ENCODE measurements at regions of chr1 and their contacts with region 1.

Region 1: GRCh38 chr1:204506961-204507387 is 9.2 kb upstream of the MDM4 start:
- DNase-seq: peak; percentile 43
- H3K4me3 ChIP-seq: peak overlapping the region; percentile 44 to 72
- H3K27ac ChIP-seq: peak overlapping the region; percentile 92 to 95
- H3K4me1 ChIP-seq: peaks cover 3 to 5% of the 10 kb centered on the region in 2 experiments; a peak in 2 of 4 replicates
- H3K27me3 ChIP-seq: no peaks in the 10 kb centered on the region
- CTCF ChIP-seq: no peak
- EP300 ChIP-seq: peak in 1 of 2 experiments; percentile 62; a peak in 1 of 4 replicates
- RAD21 ChIP-seq: no peak

Region 2: GRCh38 chr1:204411451-204412204 is 95.3 kb before region 1 on chr1 and contains the start of gene PPP1R15B:
- CTCF ChIA-PET with region 1: interaction called, 13 read pairs
- POLR2A ChIA-PET with region 1: no interaction called
- DNase-seq: peak; percentile 93
- H3K4me3 ChIP-seq: peak within 1 kb of the TSS; percentile 78 to 89
- H3K27ac ChIP-seq: peak within 1 kb of the TSS; percentile 97 to 98
- H3K4me1 ChIP-seq: peaks cover 0 to 14% of the 10 kb centered on the region in 2 experiments; a peak in 2 of 4 replicates
- H3K27me3 ChIP-seq: no peaks in the 10 kb centered on the region
- CTCF ChIP-seq: no peak
- EP300 ChIP-seq: no peak; a peak in 1 of 4 replicates
- RAD21 ChIP-seq: no peak
- polyA plus RNA-seq, gene PPP1R15B: 12.1 and 14.3 TPM in 2 replicates

Region 3: DNA sequence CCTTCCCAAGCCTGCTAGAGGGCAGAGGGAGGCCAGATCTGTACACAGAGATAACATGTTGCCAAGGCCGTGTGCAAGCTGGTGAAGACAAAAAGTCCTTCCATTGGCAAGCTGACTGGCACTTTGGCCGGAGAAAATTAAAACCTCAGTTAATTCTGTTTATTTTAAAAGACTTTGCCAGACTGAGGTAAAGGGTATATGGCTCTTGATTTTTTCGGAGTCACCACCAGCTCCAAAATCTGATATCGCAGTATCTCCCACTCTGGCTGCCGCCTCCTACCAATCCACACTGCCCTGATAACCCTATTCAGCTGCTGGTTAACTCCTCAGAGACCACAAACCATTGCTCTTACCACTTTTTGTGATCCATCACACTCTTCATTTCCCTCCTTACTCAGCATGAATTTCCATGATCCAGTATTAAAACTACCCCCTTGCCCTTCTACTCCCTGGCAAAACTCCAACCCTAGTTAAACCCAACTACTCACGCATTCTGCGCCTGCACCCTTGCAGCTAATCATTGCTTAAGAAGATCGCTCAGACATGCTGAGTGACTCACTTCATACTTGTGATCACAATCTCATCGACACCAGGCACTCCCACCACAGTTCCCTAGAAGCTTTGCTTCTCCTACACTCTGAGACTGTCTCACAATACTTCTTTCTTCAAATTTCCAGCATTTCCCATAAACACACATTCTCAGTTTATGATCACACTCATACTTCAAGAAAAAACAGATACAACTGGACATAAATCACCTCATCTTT is 89.6 kb before region 1 on chr1:
- CTCF ChIA-PET with region 1: interaction called, 1,005 read pairs
- POLR2A ChIA-PET with region 1: no interaction called
- DNase-seq: peak; percentile 65
- H3K4me3 ChIP-seq: peak overlapping the region; percentile 26 to 48; a peak in 3 of 4 replicates
- H3K27ac ChIP-seq: peak overlapping the region; percentile 90 to 99
- H3K4me1 ChIP-seq: peaks cover 10 to 29% of the 10 kb centered on the region in 2 experiments; a peak in 3 of 4 replicates
- H3K27me3 ChIP-seq: no peaks in the 10 kb centered on the region
- CTCF ChIP-seq: no peak
- EP300 ChIP-seq: peak; percentile 17 to 82; a peak in 3 of 4 replicates
- RAD21 ChIP-seq: no peak

Region 4: DNA sequence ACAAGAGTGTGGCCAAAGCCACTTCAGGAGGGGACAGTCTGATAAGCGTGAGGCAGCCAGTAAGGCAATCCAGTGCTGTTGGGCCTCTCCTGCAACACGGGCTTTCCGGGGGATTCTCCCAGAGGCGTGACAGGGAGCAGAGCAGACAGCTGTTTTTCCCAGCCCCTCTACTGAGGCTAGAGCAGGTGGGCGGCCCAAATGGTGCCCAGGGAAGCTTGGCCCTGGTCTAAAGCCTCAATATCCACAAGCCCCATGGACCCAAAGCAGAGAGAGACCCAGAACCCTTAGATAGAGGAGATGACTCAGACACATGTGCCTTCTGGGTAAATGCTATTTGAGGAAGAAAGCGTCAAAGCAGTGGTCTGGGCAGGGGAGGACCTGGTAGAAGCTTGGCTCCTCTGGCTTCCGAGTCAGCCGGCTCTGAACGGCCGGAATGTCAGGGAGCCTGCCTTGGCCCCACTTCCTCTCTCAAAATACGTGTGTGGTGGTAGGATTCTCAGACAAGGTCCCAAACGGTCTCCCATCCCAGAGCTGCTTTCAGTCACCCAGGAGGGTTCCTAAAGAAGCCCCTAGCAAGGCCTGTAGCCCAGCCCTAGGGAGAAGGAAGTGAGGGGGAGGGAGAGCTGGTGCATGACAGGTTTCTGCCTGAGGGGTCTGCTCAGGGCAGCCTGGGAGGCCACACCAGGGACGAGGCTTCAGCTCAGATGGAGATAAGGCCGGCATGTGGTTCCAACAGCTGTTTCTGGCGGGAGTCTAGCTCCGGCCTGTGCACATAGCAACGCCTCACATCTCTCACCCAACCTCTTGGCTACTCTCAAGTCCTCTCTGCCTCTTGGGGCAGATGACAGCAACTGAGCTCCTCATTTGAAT is 41.2 kb before region 1 on chr1:
- CTCF ChIA-PET with region 1: interaction called, 24 read pairs
- POLR2A ChIA-PET with region 1: no interaction called
- DNase-seq: peak; percentile 46
- H3K4me3 ChIP-seq: no peak overlapping the region
- H3K27ac ChIP-seq: no peak overlapping the region
- H3K4me1 ChIP-seq: peaks cover 0 to 12% of the 10 kb centered on the region in 2 experiments; a peak in 1 of 4 replicates
- H3K27me3 ChIP-seq: no peaks in the 10 kb centered on the region
- CTCF ChIP-seq: no peak
- EP300 ChIP-seq: no peak
- RAD21 ChIP-seq: no peak

Region 5: DNA sequence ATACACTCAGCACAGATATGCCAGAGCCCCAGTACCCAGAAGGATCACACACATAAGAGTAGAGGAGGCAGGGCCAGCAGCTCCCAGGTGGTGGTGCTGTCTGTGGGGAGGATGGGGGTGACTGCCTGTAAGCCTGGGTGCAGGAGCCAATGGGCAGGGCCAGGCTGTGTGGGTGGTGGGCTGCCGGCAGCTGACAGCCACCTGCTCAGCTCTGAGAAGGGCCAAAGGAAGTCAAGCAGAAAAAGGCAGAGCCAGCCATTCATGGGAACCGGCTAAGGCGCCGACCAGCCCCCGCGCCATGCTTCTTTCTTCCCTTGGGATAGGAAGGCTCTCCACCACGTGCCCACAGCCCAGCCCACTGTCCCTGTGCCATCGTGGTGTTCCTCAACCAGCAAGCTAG is 26.5 kb before region 1 on chr1:
- CTCF ChIA-PET with region 1: interaction called, 18 read pairs
- POLR2A ChIA-PET with region 1: interaction called, 3 read pairs
- DNase-seq: no peak
- H3K4me3 ChIP-seq: no peak overlapping the region
- H3K27ac ChIP-seq: no peak overlapping the region
- H3K4me1 ChIP-seq: peaks cover 0 to 13% of the 10 kb centered on the region in 2 experiments; a peak in 3 of 4 replicates
- H3K27me3 ChIP-seq: no peaks in the 10 kb centered on the region
- CTCF ChIP-seq: no peak
- EP300 ChIP-seq: no peak
- RAD21 ChIP-seq: no peak

Measured in SK-N-SH (cell line).